Dendritic cell treated with granulocyte-macrophage colony-stimulating factor and Interleukin-4, amounts not matched to agents 40 ng/mL and 50 ng/mL, for 4 days (primary cell): ENCODE measurements at regions of chr5 and their contacts with region 1.

Region 1: GRCh38 chr5:149442563-149443182 is 63.6 kb upstream of the IL17B start:
- H3K4me3 Mint-ChIP-seq: no peak overlapping the region
- H3K27ac Mint-ChIP-seq: no peak overlapping the region
- H3K4me1 Mint-ChIP-seq: peaks cover 5% of the 10 kb centered on the region
- H3K27me3 Mint-ChIP-seq: peaks cover 3% of the 10 kb centered on the region

Region 2: GRCh38 chr5:149333711-149334443 is 108.8 kb before region 1 on chr5:
- intact Hi-C with region 1: no loop called
- H3K4me3 Mint-ChIP-seq: no peak overlapping the region
- H3K27ac Mint-ChIP-seq: no peak overlapping the region
- H3K4me1 Mint-ChIP-seq: no peaks in the 10 kb centered on the region
- H3K27me3 Mint-ChIP-seq: no peaks in the 10 kb centered on the region

Region 3: GRCh38 chr5:149561848-149562247 is 119.2 kb after region 1 on chr5:
- intact Hi-C with region 1: loop called (anchors 1 kb)
- H3K4me3 Mint-ChIP-seq: no peak overlapping the region
- H3K27ac Mint-ChIP-seq: no peak overlapping the region
- H3K4me1 Mint-ChIP-seq: peaks cover 11% of the 10 kb centered on the region
- H3K27me3 Mint-ChIP-seq: no peaks in the 10 kb centered on the region